ENCODE measurements at regions of chr11 and their contacts with region 1.

Region 1: GRCh38 chr11:134050541-134051383 is 18.1 kb upstream of the JAM3 start:
- DNase-seq: peak; percentile 67 to 82 (median 77)
- H3K4me3 ChIP-seq: peak overlapping the region in 5 of 7 experiments; percentile 25 to 67 (median 40)
- H3K27ac ChIP-seq: no peak overlapping the region
- H3K4me1 ChIP-seq: peaks cover 0 to 20% (median 7%) of the 10 kb centered on the region in 4 experiments
- H3K27me3 ChIP-seq: peaks cover 0 to 13% (median 4%) of the 10 kb centered on the region in 5 experiments

Region 2: DNA sequence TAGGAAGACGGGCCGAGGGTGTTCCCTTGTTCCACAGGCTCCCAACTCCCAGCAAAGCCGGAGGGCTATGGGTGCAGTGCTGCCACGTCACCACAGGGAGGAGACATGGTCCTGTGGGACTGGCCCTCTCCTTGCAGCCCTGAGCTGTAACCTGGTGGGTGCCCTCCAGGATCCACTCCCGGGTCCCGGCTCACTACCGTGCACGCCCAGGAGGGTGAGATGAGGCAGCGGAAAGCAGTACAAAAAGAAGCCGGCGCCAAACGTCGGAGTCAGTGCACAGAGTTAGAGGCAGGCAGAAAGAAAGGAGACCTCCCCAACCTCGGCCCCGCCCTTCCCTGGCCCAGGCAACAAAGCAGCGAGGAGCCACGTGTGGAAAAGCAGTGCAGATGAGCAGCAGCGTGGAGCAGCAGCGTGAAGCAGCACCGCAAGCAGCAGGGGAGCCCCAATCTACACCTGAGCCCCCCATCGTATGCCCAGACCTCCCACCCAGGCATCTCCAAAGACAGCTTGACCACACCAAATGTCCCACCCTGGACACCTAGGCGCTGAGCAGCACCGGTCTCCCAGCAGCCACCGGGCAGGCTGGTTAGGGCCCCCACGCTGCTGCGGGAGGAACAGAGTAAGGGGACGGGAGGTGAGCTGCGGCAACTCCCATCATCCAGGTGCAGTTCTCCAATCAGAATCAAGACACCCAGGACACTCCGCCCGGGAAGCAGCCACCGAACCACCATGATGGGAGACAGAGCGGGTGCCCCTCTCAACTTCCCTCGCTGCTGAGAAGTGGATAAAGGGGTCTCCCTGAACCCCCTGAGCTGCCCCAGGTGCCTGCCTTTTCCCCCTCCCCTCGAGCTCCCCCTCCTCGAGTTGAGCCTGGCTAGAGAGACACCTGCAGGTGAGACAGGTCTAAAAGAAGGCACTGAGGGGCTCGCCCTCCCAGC is 122.8 kb before region 1 on chr11:
- CTCF ChIA-PET with region 1: interaction called, 14 read pairs
- POLR2A ChIA-PET with region 1: interaction called, 3 read pairs
- DNase-seq: peak; percentile 50 to 62 (median 61)
- H3K4me3 ChIP-seq: peak overlapping the region in 4 of 7 experiments; percentile 24 to 75 (median 52)
- H3K27ac ChIP-seq: no peak overlapping the region
- H3K4me1 ChIP-seq: peaks cover 0 to 20% (median 13%) of the 10 kb centered on the region in 4 experiments
- H3K27me3 ChIP-seq: peaks cover 0 to 4% (median 0%) of the 10 kb centered on the region in 5 experiments

Region 3: GRCh38 chr11:134062265-134063123 is 11.7 kb after region 1 on chr11:
- CTCF ChIA-PET with region 1: interaction called, 19 read pairs
- POLR2A ChIA-PET with region 1: no interaction called
- DNase-seq: peak in 2 of 3 donors; percentile 50 to 59
- H3K4me3 ChIP-seq: no peak overlapping the region
- H3K27ac ChIP-seq: no peak overlapping the region
- H3K4me1 ChIP-seq: peaks cover 8 to 54% (median 37%) of the 10 kb centered on the region in 4 experiments
- H3K27me3 ChIP-seq: no peaks in the 10 kb centered on the region

Region 4: DNA sequence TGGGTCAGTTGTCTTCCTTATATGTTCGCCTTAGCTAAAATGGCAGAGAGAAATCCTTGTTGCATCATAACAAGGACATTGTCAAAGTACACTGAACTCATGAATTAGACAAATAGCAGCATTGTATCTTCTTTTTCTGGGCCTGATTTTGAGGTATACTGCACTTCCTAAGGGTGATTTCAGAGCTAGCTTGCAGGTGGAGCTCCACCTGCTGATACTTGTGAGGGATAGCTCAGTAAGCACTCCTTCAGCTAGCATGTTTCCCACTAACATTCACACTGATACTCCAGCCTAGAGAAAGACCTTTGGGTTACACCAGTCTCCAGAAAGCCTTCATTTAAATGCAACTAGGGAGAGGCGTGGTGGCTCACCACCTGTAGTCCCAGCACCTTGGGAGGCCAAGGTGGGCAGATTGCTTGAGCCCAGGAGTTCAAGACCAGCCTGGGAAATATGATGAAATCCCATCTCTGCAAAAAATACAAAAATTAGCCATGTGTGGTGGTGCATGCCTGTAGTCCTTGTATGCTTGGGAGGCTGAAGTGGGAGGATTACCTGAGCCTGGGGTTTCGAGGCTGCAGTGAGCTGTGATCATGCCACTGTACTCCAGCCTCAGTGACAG is 47.9 kb after region 1 on chr11:
- CTCF ChIA-PET with region 1: interaction called, 24 read pairs
- POLR2A ChIA-PET with region 1: no interaction called
- DNase-seq: peak; percentile 26 to 56 (median 55)
- H3K4me3 ChIP-seq: no peak overlapping the region
- H3K27ac ChIP-seq: no peak overlapping the region
- H3K4me1 ChIP-seq: peaks cover 0 to 3% (median 1%) of the 10 kb centered on the region in 4 experiments
- H3K27me3 ChIP-seq: no peaks in the 10 kb centered on the region

Region 5: GRCh38 chr11:134139873-134140331 is 89.1 kb after region 1 on chr11:
- CTCF ChIA-PET with region 1: interaction called, 49 read pairs
- POLR2A ChIA-PET with region 1: no interaction called
- DNase-seq: peak; percentile 70 to 87 (median 81)
- H3K4me3 ChIP-seq: no peak overlapping the region
- H3K27ac ChIP-seq: no peak overlapping the region
- H3K4me1 ChIP-seq: no peaks in the 10 kb centered on the region
- H3K27me3 ChIP-seq: no peaks in the 10 kb centered on the region

Measured in common myeloid progenitor, CD34-positive (primary cell).